Gastrocnemius medialis (tissue), 4 donors: ENCODE measurements at regions of chr16 and their contacts with region 1.

Region 1: DNA sequence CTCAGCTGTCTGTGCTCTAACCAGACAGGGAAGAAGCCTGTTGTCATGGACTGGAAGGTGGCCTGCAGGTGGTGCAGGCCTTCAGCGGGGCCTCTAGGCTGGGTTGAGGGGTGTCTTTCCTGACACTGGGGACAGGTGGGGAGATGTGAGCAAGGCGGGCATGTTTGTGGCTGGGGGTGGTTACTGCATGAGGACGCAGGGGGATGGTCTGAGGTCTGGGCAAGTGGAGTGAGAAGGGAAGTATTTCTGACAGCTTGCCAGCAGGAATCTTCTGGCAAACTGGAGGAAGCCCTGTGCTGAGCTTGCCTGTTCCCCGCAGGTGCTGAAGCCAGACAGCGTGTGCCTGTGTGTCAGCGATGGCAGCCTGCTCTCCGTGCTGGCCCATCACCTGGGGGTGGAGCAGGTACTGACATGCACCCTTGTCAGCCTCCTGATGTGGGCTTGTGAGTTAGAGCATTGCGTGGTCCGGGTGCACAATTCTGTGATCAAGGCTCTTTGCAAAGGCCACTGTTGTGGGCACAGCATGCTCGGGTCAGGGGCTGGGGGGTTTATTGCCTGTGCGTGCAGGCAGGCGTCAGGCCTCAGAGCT is 36.2 kb downstream of the PRMT7 start:
- DNase-seq: peak; percentile 32 to 43
- ATAC-seq: peak in 1 of 2 donors; percentile 7
- H3K4me3 ChIP-seq: no peak overlapping the region
- H3K27ac ChIP-seq: peak overlapping the region; percentile 80 to 94 (median 89)
- H3K4me1 ChIP-seq: peaks cover 51 to 59% of the 10 kb centered on the region in 2 donors
- H3K27me3 ChIP-seq: no peaks in the 10 kb centered on the region
- CTCF ChIP-seq: no peak
- POLR2A ChIP-seq: no peak

Region 2: DNA sequence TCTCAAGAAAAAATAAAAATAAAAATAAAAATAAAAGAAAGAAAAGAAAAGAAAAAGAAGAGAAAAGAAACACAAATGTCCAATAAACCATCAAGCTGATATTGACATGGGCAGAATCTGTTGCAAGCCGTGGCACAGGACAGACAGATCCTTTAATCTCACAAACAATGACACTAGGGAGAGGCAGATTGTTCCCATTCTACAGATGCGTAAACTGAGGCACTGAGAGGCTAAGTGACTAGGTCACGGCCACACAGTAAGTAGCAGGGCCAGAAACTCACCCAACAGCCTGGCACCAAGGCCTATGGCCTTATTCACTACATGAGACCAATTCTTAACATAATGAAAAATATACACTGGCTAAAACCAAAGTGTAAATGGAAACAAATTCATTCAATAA is 163.8 kb after region 1 on chr16:
- in situ Hi-C with region 1: no loop called
- intact Hi-C with region 1: loop called (anchors 1 kb)
- DNase-seq: no peak
- ATAC-seq: no peak
- H3K4me3 ChIP-seq: no peak overlapping the region
- H3K27ac ChIP-seq: no peak overlapping the region
- H3K4me1 ChIP-seq: peaks cover 0 to 5% of the 10 kb centered on the region in 2 donors
- H3K27me3 ChIP-seq: peaks cover 6% of the 10 kb centered on the region in 3 donors
- CTCF ChIP-seq: no peak
- POLR2A ChIP-seq: no peak